WTC11 (cell line): ENCODE measurements at regions of chr1 and their contacts with region 1.

Region 1: DNA sequence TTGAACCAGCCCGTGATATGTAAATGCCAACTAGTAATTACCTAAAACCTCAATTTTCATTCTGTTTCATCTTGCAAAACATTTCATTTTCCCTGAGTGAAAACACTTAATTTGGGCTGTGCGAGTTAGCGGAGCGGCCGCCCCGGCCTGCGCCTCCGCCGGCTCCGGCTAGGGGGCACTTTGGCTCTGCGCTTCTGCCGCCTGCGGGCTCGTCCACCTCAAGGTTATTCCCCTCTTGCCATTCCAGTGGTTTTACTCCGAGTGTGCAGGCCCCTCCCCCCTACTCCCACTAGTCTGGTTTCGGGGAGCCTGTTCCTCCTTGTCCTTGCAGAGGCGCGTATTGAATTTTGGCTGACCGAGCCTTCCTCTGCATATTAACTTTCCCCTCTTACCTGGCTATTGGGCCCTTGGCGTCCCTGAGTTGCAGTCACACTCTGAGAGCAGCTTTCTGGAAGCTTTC is 55.6 kb downstream of the PEX14 start:
- DNase-seq: peak; percentile 87
- ATAC-seq: peak; percentile 89
- H3K4me3 Mint-ChIP-seq: peak overlapping the region; percentile 53
- H3K27ac Mint-ChIP-seq: peak overlapping the region; percentile 96
- H3K4me1 Mint-ChIP-seq: peaks cover 60% of the 10 kb centered on the region
- H3K27me3 Mint-ChIP-seq: no peaks in the 10 kb centered on the region
- CTCF ChIP-seq: peak; percentile 47

Region 2: GRCh38 chr1:10514490-10515235 is 15.6 kb before region 1 on chr1:
- CTCF ChIA-PET with region 1: interaction called, 33 read pairs
- POLR2A ChIA-PET with region 1: interaction called, 4 read pairs
- DNase-seq: no peak
- ATAC-seq: peak; percentile 56
- H3K4me3 Mint-ChIP-seq: no peak overlapping the region
- H3K27ac Mint-ChIP-seq: peak overlapping the region; percentile 44
- H3K4me1 Mint-ChIP-seq: peaks cover 80% of the 10 kb centered on the region
- H3K27me3 Mint-ChIP-seq: no peaks in the 10 kb centered on the region
- CTCF ChIP-seq: no peak

Region 3: DNA sequence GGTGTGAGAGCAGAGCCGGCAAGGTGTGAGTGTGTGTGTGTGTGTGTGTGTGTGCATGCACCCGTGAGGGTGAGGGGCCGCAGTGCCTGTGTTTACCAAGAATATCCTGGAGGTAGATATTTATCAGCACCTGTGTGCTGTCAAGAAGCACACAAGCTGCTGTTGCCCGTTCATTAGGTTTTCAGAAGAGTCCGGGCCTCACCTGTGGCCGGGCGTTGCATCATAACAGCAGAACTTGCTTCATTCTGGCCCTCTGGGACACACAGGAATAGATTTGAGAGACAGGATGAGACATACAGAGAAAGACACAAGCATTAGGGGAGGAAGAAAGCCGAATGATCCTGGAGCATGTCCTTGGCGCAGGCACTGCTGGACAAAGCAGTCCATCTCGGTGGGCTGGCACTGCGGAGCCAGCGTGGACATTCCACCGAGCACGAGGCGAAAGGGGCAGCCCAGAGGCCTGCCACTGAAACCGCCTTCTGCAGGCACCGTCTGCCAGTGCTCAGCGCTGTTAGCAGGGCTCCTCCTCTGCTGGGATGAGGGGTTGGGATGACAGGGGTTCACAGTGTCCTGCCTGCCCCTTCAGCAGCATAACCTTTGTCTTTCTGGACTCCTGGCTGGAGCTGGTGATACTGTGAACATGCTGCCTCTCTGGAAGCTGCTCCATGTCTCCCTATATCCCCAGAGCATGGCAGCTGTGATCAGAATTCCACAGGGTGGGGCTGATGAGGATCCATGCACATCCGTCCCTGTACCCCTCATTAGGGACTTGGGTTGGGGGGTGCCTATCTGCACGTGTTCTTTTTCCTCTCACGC is 25.5 kb after region 1 on chr1:
- CTCF ChIA-PET with region 1: interaction called, 13 read pairs
- POLR2A ChIA-PET with region 1: no interaction called
- DNase-seq: peak; percentile 23
- ATAC-seq: peak; percentile 57
- H3K4me3 Mint-ChIP-seq: no peak overlapping the region
- H3K27ac Mint-ChIP-seq: peak overlapping the region; percentile 95
- H3K4me1 Mint-ChIP-seq: peaks cover 36% of the 10 kb centered on the region
- H3K27me3 Mint-ChIP-seq: no peaks in the 10 kb centered on the region
- CTCF ChIP-seq: no peak

Region 4: GRCh38 chr1:10628685-10629084 is 98.4 kb after region 1 on chr1:
- CTCF ChIA-PET with region 1: interaction called, 24 read pairs
- POLR2A ChIA-PET with region 1: no interaction called
- DNase-seq: no peak
- ATAC-seq: no peak
- H3K4me3 Mint-ChIP-seq: no peak overlapping the region
- H3K27ac Mint-ChIP-seq: no peak overlapping the region; the same call in 1 of the 2 replicates
- H3K4me1 Mint-ChIP-seq: peaks cover 29% of the 10 kb centered on the region
- H3K27me3 Mint-ChIP-seq: no peaks in the 10 kb centered on the region
- CTCF ChIP-seq: no peak